Psoas muscle (tissue), 8 donors: ENCODE measurements at regions of chr6 and their contacts with region 1.

Region 1: DNA sequence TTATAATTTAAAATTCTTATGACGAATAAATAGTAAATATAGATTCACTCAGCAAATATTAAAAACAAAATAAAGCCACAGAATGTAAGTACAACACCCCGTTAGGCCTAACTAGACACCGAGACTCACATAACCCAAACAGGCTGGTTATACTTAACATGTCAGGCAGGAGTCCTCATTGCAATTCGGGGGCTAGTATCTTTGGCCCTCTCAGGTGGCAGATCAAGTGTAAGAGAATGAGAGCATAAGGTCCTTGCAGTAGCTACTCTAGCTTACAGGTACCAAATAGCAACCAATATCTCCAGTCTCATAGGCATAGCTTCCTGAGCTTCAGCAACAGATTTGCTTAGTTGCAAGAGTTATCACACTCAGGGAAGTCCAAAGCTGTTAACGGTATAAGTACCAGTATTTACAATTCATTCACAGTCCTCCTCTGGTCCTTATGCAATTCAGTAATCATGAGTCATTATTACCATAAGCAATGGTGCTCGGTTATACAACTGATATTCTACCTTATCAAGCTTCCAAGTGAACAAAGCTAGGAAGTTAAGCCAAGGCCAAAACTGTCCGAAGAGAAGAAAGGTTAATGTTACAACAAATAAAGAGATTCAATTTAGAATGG is 20.1 kb downstream of the REV3L start:
- DNase-seq: no peak
- ATAC-seq: peak; percentile 42 to 77 (median 70)
- H3K4me3 ChIP-seq: no peak overlapping the region
- H3K27ac ChIP-seq: peak overlapping the region; percentile 28
- H3K4me1 ChIP-seq: peaks cover 26% of the 10 kb centered on the region
- H3K27me3 ChIP-seq: no peaks in the 10 kb centered on the region
- CTCF ChIP-seq: no peak

Region 2: DNA sequence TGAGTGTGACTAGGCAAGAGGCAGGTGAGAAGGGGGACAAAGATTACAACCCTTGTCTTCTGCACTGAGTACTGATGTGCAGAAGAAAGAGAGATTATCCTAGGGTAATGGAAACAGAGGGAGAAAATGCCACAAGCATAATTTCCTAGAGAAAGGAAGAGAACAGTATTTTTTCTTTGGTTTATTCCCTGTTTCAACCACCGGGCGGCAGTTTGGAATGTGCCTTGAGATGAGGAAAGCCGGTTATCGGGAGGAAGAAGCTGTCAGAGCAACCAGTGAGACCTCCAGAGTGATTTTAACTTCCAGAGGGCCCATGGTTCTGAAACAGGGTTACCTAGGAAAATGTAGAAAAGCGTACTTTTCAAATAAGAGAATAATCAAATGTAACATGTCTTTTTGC is 101.2 kb before region 1 on chr6:
- intact Hi-C with region 1: loop called in 1 of 2 experiments (anchors 10 kb)
- DNase-seq: no peak
- ATAC-seq: peak in 1 of 4 donors; percentile 33
- H3K4me3 ChIP-seq: no peak overlapping the region
- H3K27ac ChIP-seq: no peak overlapping the region
- H3K4me1 ChIP-seq: no peaks in the 10 kb centered on the region
- H3K27me3 ChIP-seq: no peaks in the 10 kb centered on the region
- CTCF ChIP-seq: peak; percentile 27

Region 3: DNA sequence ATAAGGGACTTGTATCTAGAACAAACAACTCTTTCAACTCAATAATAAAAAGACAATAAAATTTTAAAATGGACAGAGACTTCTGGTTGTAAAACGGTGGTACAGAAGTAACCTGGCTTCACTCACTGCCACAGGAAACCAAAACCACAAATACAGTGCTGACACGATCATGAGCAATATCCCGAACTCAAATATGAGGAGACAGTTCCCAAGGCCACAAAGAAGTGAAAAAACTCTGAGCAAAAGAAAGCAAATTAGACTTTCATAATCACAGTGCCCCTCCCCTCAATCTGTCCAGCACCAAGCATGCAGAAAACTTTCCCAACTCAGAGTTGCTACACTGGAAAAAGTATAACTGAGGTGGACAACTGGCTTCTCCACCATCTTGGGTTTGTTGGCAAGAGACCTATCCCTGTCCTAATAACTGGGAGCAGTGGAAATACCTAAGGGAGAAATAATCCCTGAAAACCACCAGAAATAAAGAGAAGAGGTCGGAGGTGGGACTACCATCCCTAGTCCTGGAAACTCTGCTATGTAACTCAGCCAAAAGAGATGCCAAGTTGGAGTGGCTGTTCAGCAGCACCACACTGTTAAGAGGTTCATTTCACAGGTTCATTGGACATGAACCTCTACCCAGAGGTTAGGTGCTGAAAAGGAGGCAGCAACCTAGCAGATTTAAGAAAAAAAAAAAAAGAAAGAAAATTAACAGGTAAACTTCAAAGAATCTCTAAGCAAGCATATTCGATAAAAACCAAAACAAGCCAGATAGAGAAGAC is 35.4 kb before region 1 on chr6:
- intact Hi-C with region 1: loop called (anchors 5 kb)
- DNase-seq: no peak
- ATAC-seq: peak; percentile 58 to 68 (median 65)
- H3K4me3 ChIP-seq: no peak overlapping the region
- H3K27ac ChIP-seq: peak overlapping the region; percentile 10
- H3K4me1 ChIP-seq: peaks cover 54% of the 10 kb centered on the region
- H3K27me3 ChIP-seq: no peaks in the 10 kb centered on the region
- CTCF ChIP-seq: no peak